HEK293 (cell line): ENCODE measurements at regions of chr18 and their contacts with region 1.

Region 1: GRCh38 chr18:8696749-8697211 is 8.6 kb upstream of the MTCL1 start:
- H3K4me3 ChIP-seq: no peak overlapping the region
- H3K27ac ChIP-seq: no peak overlapping the region
- H3K4me1 ChIP-seq: peaks cover 3% of the 10 kb centered on the region
- CTCF ChIP-seq: 0 out of 2 replicates have a peak, but pooled peaks have one; percentile 32

Region 2: GRCh38 chr18:8654503-8655451 is 42.0 kb before region 1 on chr18:
- CTCF ChIA-PET with region 1: interaction called, 14 read pairs
- POLR2A ChIA-PET with region 1: no interaction called
- H3K4me3 ChIP-seq: no peak overlapping the region
- H3K27ac ChIP-seq: no peak overlapping the region
- H3K4me1 ChIP-seq: no peaks in the 10 kb centered on the region
- CTCF ChIP-seq: 0 out of 2 replicates have a peak, but pooled peaks have one; percentile 9

Region 3: GRCh38 chr18:8673256-8674209 is 23.2 kb before region 1 on chr18:
- CTCF ChIA-PET with region 1: interaction called, 10 read pairs
- POLR2A ChIA-PET with region 1: no interaction called
- H3K4me3 ChIP-seq: no peak overlapping the region
- H3K27ac ChIP-seq: no peak overlapping the region
- H3K4me1 ChIP-seq: no peaks in the 10 kb centered on the region
- CTCF ChIP-seq: no peak

Region 4: DNA sequence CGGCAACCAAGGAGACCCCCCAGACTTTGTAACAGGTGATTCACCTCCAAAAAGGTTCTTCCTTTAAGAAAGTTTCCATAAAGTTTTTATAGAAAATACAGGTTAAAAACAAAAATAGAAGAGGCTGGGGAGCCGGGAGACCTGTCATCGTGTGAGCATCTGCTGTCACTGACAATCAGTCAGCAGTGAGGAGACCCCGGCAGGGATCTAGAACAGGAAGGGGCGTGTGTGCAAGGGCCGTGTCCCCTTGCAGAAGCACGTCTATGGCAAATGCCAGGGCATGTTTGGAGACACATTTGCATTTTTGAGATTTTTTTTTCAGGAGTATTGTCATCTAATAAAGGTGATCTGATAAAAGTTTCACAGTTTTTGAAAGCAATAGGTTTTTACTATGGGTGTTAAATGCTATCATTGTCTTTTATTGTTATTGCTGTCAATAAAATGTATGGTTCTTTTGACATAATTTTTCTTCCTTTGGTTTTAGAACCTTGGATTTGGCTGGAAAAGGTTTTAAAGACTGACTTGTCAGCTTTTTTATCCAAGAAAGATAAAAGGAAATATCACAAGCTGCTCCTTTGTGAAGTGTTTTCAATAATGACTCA is 60.7 kb after region 1 on chr18:
- CTCF ChIA-PET with region 1: no interaction called
- POLR2A ChIA-PET with region 1: no interaction called
- H3K4me3 ChIP-seq: no peak overlapping the region
- H3K27ac ChIP-seq: no peak overlapping the region
- H3K4me1 ChIP-seq: no peaks in the 10 kb centered on the region
- CTCF ChIP-seq: no peak

Region 5: GRCh38 chr18:8779251-8779650 is 82.5 kb after region 1 on chr18:
- CTCF ChIA-PET with region 1: interaction called, 10 read pairs
- POLR2A ChIA-PET with region 1: no interaction called
- H3K4me3 ChIP-seq: no peak overlapping the region
- H3K27ac ChIP-seq: no peak overlapping the region
- H3K4me1 ChIP-seq: no peaks in the 10 kb centered on the region
- CTCF ChIP-seq: no peak

Region 6: GRCh38 chr18:8988261-8988871 is 291.6 kb after region 1 on chr18:
- CTCF ChIA-PET with region 1: interaction called, 49 read pairs
- POLR2A ChIA-PET with region 1: no interaction called
- H3K4me3 ChIP-seq: no peak overlapping the region
- H3K27ac ChIP-seq: no peak overlapping the region
- H3K4me1 ChIP-seq: no peaks in the 10 kb centered on the region
- CTCF ChIP-seq: peak; percentile 78